ENCODE measurements at regions of chr1 and their contacts with region 1.

Region 1: DNA sequence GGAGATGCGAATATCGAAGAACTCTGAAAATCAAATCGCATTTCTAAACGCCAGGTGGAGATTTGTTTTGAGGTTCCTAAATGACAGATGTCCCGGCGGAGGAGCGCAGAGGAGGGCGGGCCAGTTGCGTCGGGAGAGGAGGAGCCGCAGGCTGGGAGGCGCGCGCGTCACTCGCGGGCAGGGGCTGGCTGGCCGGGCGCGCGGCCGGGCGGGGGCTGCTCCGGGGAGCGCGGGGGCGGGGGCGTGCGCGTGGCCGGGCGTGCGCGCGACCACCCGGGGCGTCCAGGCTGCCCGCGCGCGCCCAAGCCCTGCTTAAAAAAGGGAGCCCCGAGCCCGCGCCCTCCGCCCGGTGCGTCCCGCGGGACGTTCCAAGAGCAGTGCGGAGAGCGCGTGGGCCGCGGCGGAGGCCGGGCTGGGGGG is 47.3 kb downstream of the H3-3A start:
- DNase-seq: peak; percentile 90
- ATAC-seq: peak; percentile 66
- H3K4me3 Mint-ChIP-seq: peak overlapping the region; percentile 91
- H3K27ac Mint-ChIP-seq: peak overlapping the region; percentile 93
- H3K4me1 Mint-ChIP-seq: peaks cover 42% of the 10 kb centered on the region
- H3K27me3 Mint-ChIP-seq: no peaks in the 10 kb centered on the region
- CTCF ChIP-seq: no peak

Region 2: DNA sequence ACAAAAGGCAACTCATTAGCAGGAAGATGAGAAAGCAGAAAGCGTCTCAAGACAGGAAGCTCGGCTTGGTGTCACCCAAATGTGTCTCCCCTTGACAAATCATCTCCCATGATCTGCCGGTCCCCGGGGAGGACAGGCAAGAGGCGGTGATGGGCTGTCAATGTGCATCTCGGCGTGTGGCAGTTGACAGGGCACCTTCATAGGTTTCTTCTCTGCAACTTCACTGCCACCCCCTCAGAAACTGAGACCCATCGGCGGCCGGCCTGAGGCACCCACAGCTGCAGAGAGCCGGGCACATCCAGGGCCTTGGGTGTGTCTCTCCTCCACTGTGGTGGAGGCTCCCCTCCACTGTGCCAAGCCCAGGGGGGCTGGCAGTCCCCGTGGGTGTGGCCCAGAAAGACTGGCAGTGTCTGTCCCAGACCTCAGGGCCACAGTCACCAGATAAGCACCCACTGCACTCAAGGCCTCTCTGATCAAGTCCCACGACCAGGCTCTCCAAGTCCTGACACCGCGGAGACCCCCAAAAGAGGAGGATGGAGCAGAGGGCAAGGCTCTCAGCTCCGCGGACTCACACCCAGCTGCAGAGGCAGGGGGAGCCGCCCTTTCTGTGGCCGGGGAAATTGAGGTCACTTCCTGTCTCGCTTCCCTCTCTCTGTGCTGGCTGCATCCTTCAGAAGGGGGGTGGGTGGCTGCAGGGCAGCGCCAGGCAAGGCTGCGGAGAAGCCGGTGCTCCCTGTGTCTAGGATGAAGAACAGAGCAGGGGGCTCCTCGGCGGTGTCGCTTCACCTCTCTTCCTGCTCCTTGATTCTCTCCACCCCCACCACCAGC is 642.4 kb before region 1 on chr1:
- CTCF ChIA-PET with region 1: no interaction called
- POLR2A ChIA-PET with region 1: interaction called, 17 read pairs
- intact Hi-C with region 1: no loop called
- DNase-seq: peak; percentile 75
- ATAC-seq: peak; percentile 86
- H3K4me3 Mint-ChIP-seq: peak overlapping the region; percentile 90
- H3K27ac Mint-ChIP-seq: peak overlapping the region; percentile 98
- H3K4me1 Mint-ChIP-seq: peaks cover 40% of the 10 kb centered on the region
- H3K27me3 Mint-ChIP-seq: no peaks in the 10 kb centered on the region
- CTCF ChIP-seq: no peak

Region 3: DNA sequence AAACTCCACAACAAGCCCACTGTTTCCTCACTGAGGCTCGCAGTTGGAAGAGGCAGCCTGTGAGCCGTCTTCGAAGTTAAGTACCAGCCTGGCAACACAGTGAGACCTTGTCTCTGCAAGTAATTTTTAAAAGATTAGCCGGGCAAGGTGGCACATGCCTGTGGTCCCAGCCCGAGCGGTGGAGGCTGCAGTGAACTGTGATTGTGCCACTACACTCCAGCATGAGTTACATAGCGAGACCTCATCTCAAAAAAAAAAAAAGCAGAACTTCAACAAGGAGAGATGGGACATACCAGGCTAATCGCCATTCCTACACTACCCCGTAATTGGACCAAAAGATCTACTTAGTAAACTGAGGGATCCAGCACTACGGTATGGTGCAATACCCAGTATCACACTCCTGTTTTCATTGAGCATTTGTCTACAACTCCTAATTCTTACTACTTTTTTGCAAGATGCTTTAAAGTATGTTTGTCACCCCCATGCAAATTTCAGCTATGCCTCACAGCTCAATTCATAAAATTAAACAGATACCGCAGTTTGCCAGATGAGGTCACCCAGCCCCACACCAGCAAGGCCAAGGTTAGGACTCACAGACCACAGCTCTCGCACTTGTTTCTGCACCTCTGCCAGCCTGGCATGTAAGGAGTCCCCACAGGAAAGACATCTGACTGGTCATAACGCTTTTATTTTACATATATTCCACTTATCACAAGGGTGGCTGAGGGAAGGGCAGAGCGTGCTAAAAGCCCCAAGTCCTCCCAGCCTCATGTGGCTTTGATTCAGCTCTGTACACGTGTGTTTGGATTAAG is 131.7 kb before region 1 on chr1:
- CTCF ChIA-PET with region 1: interaction called, 5 read pairs
- POLR2A ChIA-PET with region 1: interaction called, 10 read pairs
- intact Hi-C with region 1: no loop called
- DNase-seq: no peak
- ATAC-seq: peak; percentile 79
- H3K4me3 Mint-ChIP-seq: peak overlapping the region; percentile 63
- H3K27ac Mint-ChIP-seq: peak overlapping the region; percentile 81
- H3K4me1 Mint-ChIP-seq: peaks cover 33% of the 10 kb centered on the region
- H3K27me3 Mint-ChIP-seq: no peaks in the 10 kb centered on the region
- CTCF ChIP-seq: no peak

Region 4: GRCh38 chr1:226069811-226070489 is 39.9 kb before region 1 on chr1:
- CTCF ChIA-PET with region 1: interaction called, 73 read pairs
- POLR2A ChIA-PET with region 1: interaction called, 83 read pairs
- intact Hi-C with region 1: no loop called
- DNase-seq: no peak
- ATAC-seq: no peak
- H3K4me3 Mint-ChIP-seq: no peak overlapping the region
- H3K27ac Mint-ChIP-seq: no peak overlapping the region
- H3K4me1 Mint-ChIP-seq: peaks cover 51% of the 10 kb centered on the region
- H3K27me3 Mint-ChIP-seq: no peaks in the 10 kb centered on the region
- CTCF ChIP-seq: no peak

Region 5: GRCh38 chr1:226128487-226129075 is 18.7 kb after region 1 on chr1:
- CTCF ChIA-PET with region 1: interaction called, 23 read pairs
- POLR2A ChIA-PET with region 1: interaction called, 182 read pairs
- intact Hi-C with region 1: no loop called
- DNase-seq: no peak
- ATAC-seq: no peak
- H3K4me3 Mint-ChIP-seq: peak overlapping the region; percentile 41
- H3K27ac Mint-ChIP-seq: peak overlapping the region; percentile 99
- H3K4me1 Mint-ChIP-seq: peaks cover 96% of the 10 kb centered on the region
- H3K27me3 Mint-ChIP-seq: no peaks in the 10 kb centered on the region
- CTCF ChIP-seq: no peak

Region 6: DNA sequence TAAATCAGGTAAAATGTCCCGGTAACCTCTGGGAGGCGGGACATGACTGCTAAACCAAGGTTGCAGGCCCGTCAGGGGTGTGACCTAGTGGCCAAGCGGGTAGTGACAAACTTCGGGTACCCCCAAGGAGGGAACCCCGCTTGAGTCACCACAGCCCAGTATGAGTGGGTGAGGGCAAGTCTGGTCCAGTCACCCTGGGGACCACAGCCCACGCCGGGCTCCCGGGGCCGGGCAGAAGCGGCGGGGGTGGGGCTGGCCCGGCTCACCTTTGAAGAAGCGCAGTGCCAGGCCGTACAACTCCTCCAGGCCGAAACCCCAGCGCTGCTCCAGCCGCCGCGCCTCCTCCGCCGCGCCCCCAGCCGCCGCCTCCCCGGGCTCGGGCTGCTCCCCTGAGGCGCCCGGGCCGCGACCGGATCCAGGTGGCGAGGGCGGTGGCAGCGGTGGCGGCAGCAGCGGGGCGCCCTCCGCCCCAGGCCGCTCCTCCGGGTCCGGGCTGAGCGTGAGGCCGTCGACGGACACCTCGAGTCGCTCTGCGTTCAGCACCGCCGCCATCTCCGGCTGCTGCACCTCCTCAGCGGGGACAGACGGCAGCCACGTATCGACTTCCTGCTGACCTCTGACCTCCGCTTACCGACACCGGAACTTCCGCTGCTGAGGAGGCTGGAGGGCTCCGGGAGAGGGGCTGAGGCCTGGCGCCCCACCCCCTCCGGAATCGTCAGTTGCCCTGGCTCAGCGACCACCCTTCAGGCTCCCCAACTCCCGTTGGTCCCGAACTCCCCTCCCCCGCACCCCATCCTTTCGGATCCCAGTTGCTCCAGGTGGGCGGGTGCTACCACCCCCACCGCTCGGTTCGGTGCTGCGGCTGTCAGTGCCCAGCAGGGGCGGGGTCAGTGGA is 76.5 kb after region 1 on chr1 and contains the start of gene ACBD3:
- CTCF ChIA-PET with region 1: no interaction called
- POLR2A ChIA-PET with region 1: interaction called, 10 read pairs
- intact Hi-C with region 1: no loop called
- DNase-seq: peak; percentile 79
- ATAC-seq: peak; percentile 93
- H3K4me3 Mint-ChIP-seq: peak within 1 kb of the TSS; percentile 94
- H3K27ac Mint-ChIP-seq: peak within 1 kb of the TSS; percentile 94
- H3K4me1 Mint-ChIP-seq: peaks cover 45% of the 10 kb centered on the region
- H3K27me3 Mint-ChIP-seq: no peaks in the 10 kb centered on the region
- CTCF ChIP-seq: no peak
- total RNA-seq, gene ACBD3: 38.6 and 41.4 TPM in 2 replicates